Heart left ventricle (tissue), 16 donors: ENCODE measurements at regions of chr14 and their contacts with region 1.

Region 1: GRCh38 chr14:76918751-76919543 is 92.7 kb downstream of the LRRC74A start:
- DNase-seq: peak; percentile 91 to 98 (median 96)
- ATAC-seq: peak; percentile 86 to 91 (median 90)
- H3K4me3 ChIP-seq: peak overlapping the region in 4 of 12 donors; percentile 1 to 19 (median 4)
- H3K27ac ChIP-seq: peak overlapping the region; percentile 88 to 99 (median 94)
- H3K4me1 ChIP-seq: peaks cover 21 to 70% (median 50%) of the 10 kb centered on the region in 12 donors
- H3K27me3 ChIP-seq: no peaks in the 10 kb centered on the region
- CTCF ChIP-seq: peak in 2 of 12 donors; percentile 9 to 17
- POLR2A ChIP-seq: peak in 1 of 2 donors; percentile 37

Region 2: GRCh38 chr14:76947078-76947837 is 28.3 kb after region 1 on chr14:
- intact Hi-C with region 1: loop called in 3 of 10 experiments (anchors 1 to 2 kb)
- DNase-seq: peak; percentile 91 to 94 (median 93)
- ATAC-seq: peak; percentile 85 to 94 (median 94)
- H3K4me3 ChIP-seq: peak overlapping the region in 9 of 12 donors; percentile 0 to 29 (median 14)
- H3K27ac ChIP-seq: peak overlapping the region in 11 of 12 donors; percentile 77 to 89 (median 80)
- H3K4me1 ChIP-seq: peaks cover 5 to 50% (median 38%) of the 10 kb centered on the region in 12 donors
- H3K27me3 ChIP-seq: no peaks in the 10 kb centered on the region
- CTCF ChIP-seq: peak; percentile 32 to 78 (median 58)
- POLR2A ChIP-seq: no peak

Region 3: DNA sequence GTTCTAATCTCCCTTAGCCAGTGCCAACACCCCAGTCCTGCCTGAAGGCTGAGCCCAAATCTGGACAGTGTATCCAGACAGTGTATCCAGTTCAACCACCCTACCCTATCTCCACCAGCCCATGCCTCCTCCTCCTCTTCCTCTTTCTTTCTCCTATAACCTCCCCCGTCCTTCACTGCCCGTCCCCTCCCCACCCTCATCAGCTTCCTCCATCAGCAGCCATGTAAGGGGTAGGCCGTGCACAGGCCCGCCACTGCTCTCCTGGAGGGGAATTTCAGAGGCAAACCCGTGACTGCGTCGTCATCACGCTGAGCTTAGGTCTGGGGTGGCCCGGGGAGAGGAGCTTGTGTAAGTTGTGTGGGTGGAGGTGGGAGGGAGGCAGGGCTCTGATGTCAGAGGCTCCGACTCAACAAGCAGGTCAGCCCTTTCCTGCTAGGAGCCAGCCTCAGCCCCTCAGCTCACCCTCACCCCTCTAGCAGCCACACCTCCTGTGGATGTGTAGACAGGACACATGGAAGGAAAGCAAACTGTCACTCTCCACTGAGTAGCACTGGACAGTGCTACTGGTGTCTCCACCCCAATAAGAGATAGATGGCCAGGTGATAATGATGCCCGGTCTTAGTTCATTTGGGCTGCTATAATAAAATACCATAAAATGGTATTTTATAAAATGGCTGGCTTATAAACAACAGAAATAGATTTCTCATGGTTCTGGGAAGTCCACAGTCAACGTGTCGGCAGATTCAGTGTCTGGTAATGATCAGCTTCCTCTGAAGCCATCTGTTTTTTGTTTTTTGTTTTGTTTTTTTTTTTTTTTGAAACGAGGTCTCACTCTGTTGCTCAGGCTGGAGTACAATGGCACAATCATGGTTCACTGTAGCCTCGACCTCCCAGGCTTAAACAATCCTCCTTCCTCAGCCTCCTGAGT is 59.1 kb after region 1 on chr14:
- intact Hi-C with region 1: no loop called
- DNase-seq: peak; percentile 36 to 82 (median 70)
- ATAC-seq: peak; percentile 26 to 87 (median 82)
- H3K4me3 ChIP-seq: no peak overlapping the region
- H3K27ac ChIP-seq: peak overlapping the region in 3 of 12 donors; percentile 39 to 81 (median 42)
- H3K4me1 ChIP-seq: peaks cover 0 to 16% (median 0%) of the 10 kb centered on the region in 12 donors
- H3K27me3 ChIP-seq: no peaks in the 10 kb centered on the region
- CTCF ChIP-seq: no peak
- POLR2A ChIP-seq: no peak

Region 4: DNA sequence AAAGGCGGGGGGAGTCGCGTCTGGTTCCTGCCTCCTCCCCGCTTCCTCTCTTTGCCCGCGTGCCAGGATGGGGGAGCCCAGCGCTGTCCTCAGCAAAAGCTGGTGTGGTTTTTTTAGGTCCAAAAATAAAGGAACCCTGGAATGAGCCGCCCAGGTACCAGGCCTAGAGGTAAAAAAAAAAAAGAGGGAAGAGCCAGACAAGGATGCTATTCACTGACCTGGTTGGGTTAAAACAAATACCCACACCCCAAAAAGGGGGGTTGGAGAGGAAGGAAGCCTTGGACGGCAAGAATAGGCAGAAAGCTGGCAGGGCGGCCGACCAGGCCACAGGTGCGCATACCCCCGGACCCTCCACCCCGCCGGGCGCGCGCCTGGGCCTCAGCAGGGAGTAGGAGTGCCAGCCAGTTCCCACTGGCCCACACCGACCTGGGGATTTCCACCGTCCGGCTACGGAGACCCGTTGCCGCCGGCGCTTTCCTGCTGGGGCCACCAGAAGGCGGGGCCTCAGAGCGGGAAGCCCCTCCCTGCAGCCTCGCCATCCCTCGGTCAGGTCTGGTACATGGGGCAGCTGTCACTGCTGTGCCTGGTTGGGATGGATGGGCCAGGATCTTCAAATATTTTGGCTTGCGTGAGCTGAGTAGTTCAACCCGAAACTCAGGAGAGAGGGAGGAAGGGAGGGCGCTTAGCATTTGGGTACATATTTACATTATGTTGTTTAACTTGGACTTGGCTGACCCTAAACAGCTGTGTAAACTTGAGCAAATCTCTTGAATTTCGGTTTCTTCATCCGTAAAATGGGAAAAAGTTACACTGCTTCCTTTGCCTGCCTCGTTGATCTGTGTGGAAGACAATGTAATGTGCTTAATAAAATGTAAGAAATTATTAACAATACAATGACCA is 114.9 kb after region 1 on chr14:
- intact Hi-C with region 1: loop called in 7 of 10 experiments (anchors 2 to 10 kb)
- DNase-seq: peak; percentile 89 to 93 (median 91)
- ATAC-seq: peak; percentile 22 to 75 (median 71)
- H3K4me3 ChIP-seq: peak overlapping the region; percentile 9 to 71 (median 60)
- H3K27ac ChIP-seq: peak overlapping the region; percentile 96 to 100 (median 100)
- H3K4me1 ChIP-seq: peaks cover 24 to 100% (median 72%) of the 10 kb centered on the region in 12 donors
- H3K27me3 ChIP-seq: no peaks in the 10 kb centered on the region
- CTCF ChIP-seq: peak in 2 of 12 donors; percentile 5 to 12
- POLR2A ChIP-seq: peak in 1 of 2 donors; percentile 52

Region 5: DNA sequence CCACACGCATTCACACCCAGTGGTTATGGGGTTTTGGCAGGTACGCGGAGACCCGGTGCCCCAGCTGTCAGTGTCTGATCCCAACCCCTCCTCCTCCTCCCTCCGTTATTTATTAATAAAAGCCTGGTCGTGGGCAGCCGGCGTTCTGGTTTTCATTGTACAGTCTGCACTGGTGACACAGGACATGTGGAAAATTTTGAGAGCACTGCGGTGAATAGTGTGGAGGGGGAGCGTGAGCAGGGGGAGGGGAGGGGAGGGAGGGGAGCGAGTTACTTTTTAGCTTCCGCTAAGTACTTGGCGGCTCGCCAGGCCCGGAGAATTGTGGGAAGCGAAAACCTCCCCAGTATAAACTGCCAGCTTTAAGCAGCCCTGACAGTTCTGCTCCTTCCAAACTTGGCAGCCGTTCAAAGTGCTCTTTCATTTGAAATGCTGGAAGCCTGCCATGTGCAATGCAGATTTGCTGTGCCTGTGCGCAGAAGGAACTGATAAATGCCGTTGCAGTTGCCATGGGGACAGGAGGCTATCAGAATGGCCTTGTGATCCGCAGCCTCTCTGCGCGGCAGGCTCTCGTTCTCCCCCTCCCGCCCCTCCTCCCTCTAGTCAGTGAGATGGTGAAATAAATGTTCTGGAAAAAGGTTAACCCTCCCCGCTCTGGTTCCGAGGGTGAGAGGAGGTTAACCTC is 121.3 kb after region 1 on chr14:
- intact Hi-C with region 1: loop called in 1 of 10 experiments (anchors 1 kb)
- DNase-seq: peak; percentile 100
- ATAC-seq: peak; percentile 81 to 91 (median 90)
- H3K4me3 ChIP-seq: peak overlapping the region in 10 of 12 donors; percentile 28 to 55 (median 42)
- H3K27ac ChIP-seq: peak overlapping the region; percentile 92 to 99 (median 97)
- H3K4me1 ChIP-seq: peaks cover 37 to 97% (median 83%) of the 10 kb centered on the region in 12 donors
- H3K27me3 ChIP-seq: no peaks in the 10 kb centered on the region
- CTCF ChIP-seq: no peak
- POLR2A ChIP-seq: peak in 1 of 2 donors; percentile 22

Region 6: GRCh38 chr14:77526266-77526665 is 607.3 kb after region 1 on chr14:
- intact Hi-C with region 1: no loop called
- DNase-seq: no peak
- ATAC-seq: no peak
- H3K4me3 ChIP-seq: no peak overlapping the region
- H3K27ac ChIP-seq: no peak overlapping the region
- H3K4me1 ChIP-seq: peaks cover 0 to 4% (median 0%) of the 10 kb centered on the region in 12 donors
- H3K27me3 ChIP-seq: no peaks in the 10 kb centered on the region
- CTCF ChIP-seq: no peak
- POLR2A ChIP-seq: no peak